Activated CD8-positive, alpha-beta T cell treated with anti-CD3 and anti-CD28 coated beads for 36 hours (primary cell): ENCODE measurements at regions of chr7 and their contacts with region 1.

Region 1: DNA sequence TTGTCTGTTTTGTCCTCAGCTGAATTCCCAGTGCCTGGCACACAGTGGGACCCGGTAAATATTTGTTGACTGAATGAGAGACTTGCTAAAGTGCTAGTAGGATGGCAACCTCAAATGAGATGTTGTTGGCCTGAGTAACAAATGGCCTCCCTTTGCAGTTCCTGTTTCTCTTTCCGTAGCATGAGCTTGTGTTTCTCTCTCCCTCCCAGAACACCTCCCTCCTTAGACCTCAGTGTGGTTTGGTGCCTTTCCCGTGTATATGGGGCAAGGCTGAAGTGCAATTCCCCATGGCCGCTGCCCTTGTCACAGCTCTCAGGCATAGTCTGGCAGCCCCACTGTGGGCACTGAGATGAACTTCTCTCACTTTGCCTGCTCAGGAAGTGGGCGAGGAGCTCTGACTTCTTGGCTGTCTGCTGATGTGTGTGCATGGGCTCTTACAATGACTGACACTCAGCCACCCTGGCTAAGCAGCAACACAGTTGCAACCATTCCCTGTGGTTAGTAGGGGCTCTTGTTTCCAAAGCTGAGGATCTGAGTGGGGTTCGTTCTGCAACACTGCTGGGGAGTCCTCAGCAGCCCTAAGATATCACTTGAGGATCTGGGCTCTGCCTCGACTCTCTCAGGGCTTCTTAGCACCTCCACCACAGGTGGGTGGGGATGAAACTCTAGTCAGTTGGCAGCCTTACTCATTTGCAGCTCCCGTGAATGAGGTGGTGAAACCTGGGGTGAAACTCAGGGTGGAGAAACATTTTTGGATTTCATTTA is 136.1 kb downstream of the ICA1 start:
- DNase-seq: peak; percentile 94
- ATAC-seq: peak; percentile 91
- H3K4me3 Mint-ChIP-seq: peak overlapping the region; percentile 63
- H3K27ac Mint-ChIP-seq: peak overlapping the region; percentile 98
- H3K4me1 Mint-ChIP-seq: peaks cover 78% of the 10 kb centered on the region
- H3K27me3 Mint-ChIP-seq: no peaks in the 10 kb centered on the region
- CTCF ChIP-seq: no peak

Region 2: DNA sequence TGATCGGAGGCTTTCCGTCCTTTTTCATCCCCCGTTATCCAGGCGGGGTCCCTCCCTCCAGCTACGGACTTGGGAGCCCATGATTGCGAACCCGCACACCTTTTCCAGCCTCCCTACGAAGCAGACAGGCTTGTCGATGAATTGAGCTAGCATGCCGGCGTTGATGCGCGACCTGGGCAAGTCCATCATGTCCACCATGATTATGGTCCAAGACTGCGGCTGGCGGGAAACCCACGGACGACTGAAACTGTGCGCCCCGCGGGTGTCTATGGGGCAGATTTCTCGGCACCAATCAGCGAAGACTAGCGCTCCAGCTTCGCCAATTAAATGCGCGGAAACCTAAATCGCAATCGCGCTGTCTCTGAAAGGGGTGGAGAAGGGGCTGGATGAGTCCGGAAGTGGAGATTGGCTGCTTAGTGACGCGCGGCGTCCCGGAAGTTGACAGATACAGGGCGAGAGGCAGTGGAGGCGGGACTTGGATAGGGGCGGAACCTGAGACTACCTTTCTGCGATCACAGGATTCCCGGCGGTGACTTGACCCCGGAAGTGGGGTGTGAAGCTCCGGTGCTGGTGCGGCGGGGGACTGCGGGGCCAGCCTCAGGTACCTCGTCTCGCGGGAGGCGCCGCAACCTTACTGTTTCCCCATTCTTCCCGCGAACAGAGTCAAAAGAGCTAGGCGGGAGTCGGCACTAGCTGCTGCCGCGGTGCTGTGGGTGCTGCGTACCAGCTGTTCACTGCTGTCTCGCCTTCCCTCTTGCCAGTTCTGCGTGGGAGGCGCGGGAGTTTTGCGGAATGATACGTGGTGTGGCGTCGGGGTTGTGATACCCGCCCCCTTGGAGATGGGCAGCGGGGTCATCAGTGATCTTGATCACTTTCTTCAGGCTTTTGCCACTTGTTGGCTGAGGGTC is 485.4 kb before region 1 on chr7 and contains the start of gene UMAD1:
- CTCF ChIA-PET with region 1: no interaction called
- POLR2A ChIA-PET with region 1: interaction called, 11 read pairs
- intact Hi-C with region 1: no loop called
- DNase-seq: peak; percentile 99
- ATAC-seq: peak; percentile 95
- H3K4me3 Mint-ChIP-seq: peak within 1 kb of the TSS; percentile 89
- H3K27ac Mint-ChIP-seq: peak within 1 kb of the TSS; percentile 99
- H3K4me1 Mint-ChIP-seq: peaks cover 37% of the 10 kb centered on the region
- H3K27me3 Mint-ChIP-seq: no peaks in the 10 kb centered on the region
- CTCF ChIP-seq: no peak
- total RNA-seq, gene UMAD1: 10.1 to 11.1 TPM

Region 3: DNA sequence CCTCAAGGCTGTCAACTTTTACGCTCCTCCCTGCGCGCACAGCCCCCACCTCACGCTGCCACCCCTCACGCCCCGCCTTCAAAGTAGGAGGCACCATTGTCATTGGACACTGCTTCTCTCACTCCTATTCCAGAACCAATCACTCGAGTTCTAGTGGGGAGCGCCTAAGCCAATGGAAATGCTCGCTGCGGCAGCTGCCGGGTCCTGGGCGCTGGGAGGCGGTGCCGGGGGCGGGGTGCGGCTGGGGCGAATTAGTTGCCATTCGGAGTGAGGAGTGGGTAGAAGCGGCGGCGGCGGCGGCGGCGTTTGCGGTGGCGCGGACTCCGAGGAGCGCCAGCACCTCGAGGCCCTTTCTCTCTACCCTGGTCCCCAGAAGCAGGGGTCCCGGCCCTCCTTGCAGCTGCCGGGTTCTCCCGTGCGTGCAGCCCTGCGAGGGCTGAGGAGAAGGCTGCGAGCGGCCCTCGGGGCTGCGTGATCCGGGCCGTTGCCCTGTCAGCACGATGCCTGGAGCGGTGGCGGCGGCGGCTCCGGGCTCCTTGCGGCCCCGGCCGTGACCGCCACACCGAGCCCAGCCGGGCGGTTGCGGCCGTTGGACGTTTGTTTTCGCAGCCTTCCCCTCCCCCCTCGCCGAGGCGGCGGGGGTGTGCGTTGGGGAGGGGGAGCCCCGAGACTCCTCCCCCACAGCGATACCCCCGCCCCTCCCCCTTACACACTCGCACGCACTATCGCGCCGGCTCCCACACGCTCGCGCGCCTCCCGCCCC is 157.1 kb before region 1 on chr7 and contains the start of gene GLCCI1:
- CTCF ChIA-PET with region 1: interaction called, 4 read pairs
- POLR2A ChIA-PET with region 1: interaction called, 20 read pairs
- intact Hi-C with region 1: loop called (anchors 5 kb)
- DNase-seq: peak; percentile 98
- ATAC-seq: peak; percentile 92
- H3K4me3 Mint-ChIP-seq: peak within 1 kb of the TSS; percentile 93
- H3K27ac Mint-ChIP-seq: peak within 1 kb of the TSS; percentile 92
- H3K4me1 Mint-ChIP-seq: peaks cover 27% of the 10 kb centered on the region
- H3K27me3 Mint-ChIP-seq: no peaks in the 10 kb centered on the region
- CTCF ChIP-seq: no peak
- total RNA-seq, gene GLCCI1: 11.3 to 13.0 TPM

Region 4: GRCh38 chr7:8051373-8051772 is 74.5 kb before region 1 on chr7:
- CTCF ChIA-PET with region 1: no interaction called
- POLR2A ChIA-PET with region 1: no interaction called
- intact Hi-C with region 1: loop called (anchors 5 kb)
- DNase-seq: no peak
- ATAC-seq: peak; percentile 39
- H3K4me3 Mint-ChIP-seq: no peak overlapping the region
- H3K27ac Mint-ChIP-seq: no peak overlapping the region
- H3K4me1 Mint-ChIP-seq: peaks cover 24% of the 10 kb centered on the region
- H3K27me3 Mint-ChIP-seq: no peaks in the 10 kb centered on the region
- CTCF ChIP-seq: no peak

Region 5: DNA sequence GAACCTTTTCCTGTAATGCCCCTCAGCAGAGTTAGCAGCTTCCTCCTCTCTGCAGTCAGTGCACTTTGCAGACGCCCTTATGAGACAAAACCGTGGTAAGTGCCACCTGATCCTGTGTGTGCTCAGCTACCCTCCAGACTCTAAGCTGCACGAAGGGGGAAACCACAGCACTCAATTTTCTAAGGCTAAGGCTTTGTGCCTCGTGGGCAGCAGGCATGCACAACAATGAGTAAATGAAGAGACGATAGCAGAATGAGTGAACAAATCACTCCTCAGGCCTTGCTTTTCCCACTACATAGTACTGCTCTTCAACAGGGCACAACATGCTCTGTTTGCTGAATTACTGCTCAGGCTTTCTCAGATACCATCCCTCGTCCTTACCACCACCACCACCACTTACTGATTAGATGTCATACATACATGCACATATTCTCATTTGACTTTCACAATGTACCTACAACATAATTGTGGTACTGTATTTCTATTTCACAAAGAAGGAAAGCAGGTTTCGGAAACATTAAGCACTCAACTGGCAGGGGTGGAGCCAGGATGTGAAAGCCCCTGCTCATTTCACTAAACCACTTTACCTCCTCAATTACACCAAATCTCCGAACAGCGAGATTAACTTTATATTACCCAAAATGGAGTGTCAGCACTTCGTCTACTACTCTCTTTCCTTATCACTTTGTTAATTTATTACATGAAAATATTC is 50.7 kb after region 1 on chr7:
- CTCF ChIA-PET with region 1: interaction called, 5 read pairs
- POLR2A ChIA-PET with region 1: interaction called, 9 read pairs
- intact Hi-C with region 1: loop called (anchors 2 kb)
- DNase-seq: peak; percentile 81
- ATAC-seq: peak; percentile 88
- H3K4me3 Mint-ChIP-seq: peak overlapping the region; percentile 65
- H3K27ac Mint-ChIP-seq: peak overlapping the region; percentile 95
- H3K4me1 Mint-ChIP-seq: peaks cover 55% of the 10 kb centered on the region
- H3K27me3 Mint-ChIP-seq: no peaks in the 10 kb centered on the region
- CTCF ChIP-seq: no peak

Region 6: DNA sequence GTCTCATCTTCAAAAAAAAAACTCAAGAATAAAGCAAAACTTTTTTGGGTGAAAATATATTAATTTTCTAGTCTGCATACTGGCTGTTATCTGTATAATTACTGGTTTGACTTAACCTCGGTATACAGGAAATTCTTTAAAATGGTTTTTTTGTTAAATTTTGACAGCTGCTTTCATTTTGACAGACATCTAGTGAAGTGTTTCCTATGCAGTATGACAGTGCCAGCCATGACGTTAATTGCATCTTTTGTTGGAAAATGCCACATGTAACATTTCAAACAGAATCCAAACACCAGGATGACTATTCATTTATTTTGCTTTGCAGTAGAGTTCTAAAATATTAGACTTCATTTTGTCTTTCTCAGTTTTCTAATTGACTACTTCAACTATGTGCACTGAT is 767.9 kb after region 1 on chr7:
- CTCF ChIA-PET with region 1: no interaction called
- POLR2A ChIA-PET with region 1: no interaction called
- intact Hi-C with region 1: no loop called
- DNase-seq: no peak
- ATAC-seq: no peak
- H3K4me3 Mint-ChIP-seq: no peak overlapping the region
- H3K27ac Mint-ChIP-seq: no peak overlapping the region
- H3K4me1 Mint-ChIP-seq: no peaks in the 10 kb centered on the region
- H3K27me3 Mint-ChIP-seq: no peaks in the 10 kb centered on the region
- CTCF ChIP-seq: no peak